ENCODE measurements at regions of chr11 and their contacts with region 1.

Region 1: GRCh38 chr11:80925321-80925720 is 1484.5 kb upstream of the TENM4 start:
- DNase-seq: no peak
- ATAC-seq: peak in 1 of 8 donors; percentile 41
- H3K4me3 ChIP-seq: no peak overlapping the region
- H3K27ac ChIP-seq: no peak overlapping the region
- H3K4me1 ChIP-seq: no peaks in the 10 kb centered on the region
- H3K27me3 ChIP-seq: no peaks in the 10 kb centered on the region
- CTCF ChIP-seq: no peak

Region 2: GRCh38 chr11:80822308-80822707 is 103.0 kb before region 1 on chr11:
- intact Hi-C with region 1: no loop called
- DNase-seq: no peak
- ATAC-seq: no peak
- H3K4me3 ChIP-seq: no peak overlapping the region
- H3K27ac ChIP-seq: no peak overlapping the region
- H3K4me1 ChIP-seq: no peaks in the 10 kb centered on the region
- H3K27me3 ChIP-seq: no peaks in the 10 kb centered on the region
- CTCF ChIP-seq: no peak

Region 3: GRCh38 chr11:81359476-81359875 is 434.2 kb after region 1 on chr11:
- intact Hi-C with region 1: loop called in 1 of 10 experiments (anchors 10 kb)
- DNase-seq: no peak
- ATAC-seq: no peak
- H3K4me3 ChIP-seq: no peak overlapping the region
- H3K27ac ChIP-seq: no peak overlapping the region
- H3K4me1 ChIP-seq: no peaks in the 10 kb centered on the region
- H3K27me3 ChIP-seq: no peaks in the 10 kb centered on the region
- CTCF ChIP-seq: no peak